ENCODE measurements at regions of chr9 and their contacts with region 1.

Region 1: GRCh38 chr9:35553670-35554543 is 51.2 kb upstream of the TESK1 start:
- DNase-seq: peak; percentile 58
- ATAC-seq: peak; percentile 68
- H3K4me3 Mint-ChIP-seq: no peak overlapping the region
- H3K27ac Mint-ChIP-seq: no peak overlapping the region
- H3K4me1 Mint-ChIP-seq: no peaks in the 10 kb centered on the region
- H3K27me3 Mint-ChIP-seq: peaks cover 2% of the 10 kb centered on the region

Region 2: GRCh38 chr9:35258676-35259474 is 295.0 kb before region 1 on chr9:
- CTCF ChIA-PET with region 1: interaction called, 13 read pairs
- POLR2A ChIA-PET with region 1: no interaction called
- DNase-seq: peak; percentile 62
- ATAC-seq: no peak
- H3K4me3 Mint-ChIP-seq: no peak overlapping the region
- H3K27ac Mint-ChIP-seq: no peak overlapping the region
- H3K4me1 Mint-ChIP-seq: peaks cover 4% of the 10 kb centered on the region
- H3K27me3 Mint-ChIP-seq: peaks cover 6% of the 10 kb centered on the region

Region 3: DNA sequence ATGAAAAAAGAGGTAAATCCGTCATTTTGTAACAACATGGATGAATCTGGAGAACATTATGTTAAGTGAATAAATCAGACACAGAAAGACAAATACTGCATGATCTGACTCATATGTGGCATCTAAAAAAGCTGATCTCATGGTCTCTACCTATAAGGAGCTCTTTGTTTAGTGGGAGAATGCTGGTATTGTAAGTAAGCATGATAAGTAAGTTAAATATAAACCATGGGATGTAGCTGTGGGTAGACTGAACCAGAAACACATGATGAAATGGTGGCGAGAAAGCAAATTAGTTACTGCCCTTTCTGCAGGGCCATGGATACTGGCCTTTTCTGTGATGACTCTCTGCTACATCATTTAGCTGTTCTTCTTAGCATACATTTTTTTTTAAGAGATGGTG is 130.4 kb before region 1 on chr9:
- CTCF ChIA-PET with region 1: no interaction called
- POLR2A ChIA-PET with region 1: no interaction called
- DNase-seq: no peak
- ATAC-seq: no peak
- H3K4me3 Mint-ChIP-seq: no peak overlapping the region
- H3K27ac Mint-ChIP-seq: no peak overlapping the region
- H3K4me1 Mint-ChIP-seq: no peaks in the 10 kb centered on the region
- H3K27me3 Mint-ChIP-seq: peaks cover 40% of the 10 kb centered on the region

Region 4: GRCh38 chr9:35452481-35452880 is 101.4 kb before region 1 on chr9:
- CTCF ChIA-PET with region 1: no interaction called
- POLR2A ChIA-PET with region 1: no interaction called
- DNase-seq: no peak
- ATAC-seq: no peak
- H3K4me3 Mint-ChIP-seq: no peak overlapping the region
- H3K27ac Mint-ChIP-seq: no peak overlapping the region
- H3K4me1 Mint-ChIP-seq: no peaks in the 10 kb centered on the region
- H3K27me3 Mint-ChIP-seq: peaks cover 14% of the 10 kb centered on the region

Region 5: GRCh38 chr9:35495984-35496383 is 57.9 kb before region 1 on chr9:
- CTCF ChIA-PET with region 1: interaction called, 10 read pairs
- POLR2A ChIA-PET with region 1: no interaction called
- DNase-seq: peak; percentile 41
- ATAC-seq: peak; percentile 82
- H3K4me3 Mint-ChIP-seq: no peak overlapping the region
- H3K27ac Mint-ChIP-seq: no peak overlapping the region
- H3K4me1 Mint-ChIP-seq: peaks cover 27% of the 10 kb centered on the region
- H3K27me3 Mint-ChIP-seq: no peaks in the 10 kb centered on the region

Region 6: DNA sequence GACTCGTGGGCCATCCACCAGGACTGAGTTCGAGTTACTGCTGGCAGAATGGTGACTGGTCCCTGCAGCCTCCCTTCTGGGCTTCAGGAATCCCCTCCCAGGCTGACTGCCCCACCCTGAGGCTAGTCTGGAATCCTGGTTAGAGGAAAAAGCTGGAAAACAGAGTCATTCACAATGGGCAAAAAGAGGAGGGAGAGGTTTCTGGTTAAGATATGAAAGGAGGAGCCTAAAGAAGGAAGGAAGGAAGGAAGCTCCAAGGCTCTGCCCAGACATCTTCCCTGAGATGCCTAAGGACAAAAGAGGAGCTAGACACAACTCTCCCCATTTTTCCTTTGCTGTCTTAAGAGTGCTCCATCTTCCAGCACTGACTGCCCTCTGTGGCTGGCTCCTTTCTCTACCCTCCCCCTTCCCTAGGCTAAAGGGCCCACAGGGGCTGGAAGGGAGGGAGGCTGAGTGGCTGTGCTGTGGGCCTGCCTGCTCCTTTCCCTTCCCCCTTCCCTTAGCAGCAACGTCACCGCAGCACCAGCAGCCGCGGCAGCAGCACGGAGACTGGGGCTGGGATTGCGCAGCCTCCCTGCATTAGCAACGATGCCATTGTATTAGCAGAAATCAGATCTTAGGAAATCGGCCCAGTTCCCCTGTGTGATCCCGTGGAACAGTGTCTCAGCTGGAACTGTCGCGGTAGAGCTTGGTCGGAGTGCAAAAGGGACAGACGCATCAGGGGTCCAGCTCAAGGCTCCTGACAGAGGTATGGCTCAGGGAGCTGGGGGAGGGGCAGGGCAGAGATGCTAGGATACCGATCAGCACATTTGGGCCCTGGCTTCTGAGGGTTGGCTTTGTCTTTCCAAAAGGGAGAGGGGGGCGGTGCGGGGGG is 15.3 kb before region 1 on chr9:
- CTCF ChIA-PET with region 1: interaction called, 17 read pairs
- POLR2A ChIA-PET with region 1: no interaction called
- DNase-seq: no peak
- ATAC-seq: no peak
- H3K4me3 Mint-ChIP-seq: no peak overlapping the region
- H3K27ac Mint-ChIP-seq: no peak overlapping the region
- H3K4me1 Mint-ChIP-seq: no peaks in the 10 kb centered on the region
- H3K27me3 Mint-ChIP-seq: peaks cover 12% of the 10 kb centered on the region

Region 7: DNA sequence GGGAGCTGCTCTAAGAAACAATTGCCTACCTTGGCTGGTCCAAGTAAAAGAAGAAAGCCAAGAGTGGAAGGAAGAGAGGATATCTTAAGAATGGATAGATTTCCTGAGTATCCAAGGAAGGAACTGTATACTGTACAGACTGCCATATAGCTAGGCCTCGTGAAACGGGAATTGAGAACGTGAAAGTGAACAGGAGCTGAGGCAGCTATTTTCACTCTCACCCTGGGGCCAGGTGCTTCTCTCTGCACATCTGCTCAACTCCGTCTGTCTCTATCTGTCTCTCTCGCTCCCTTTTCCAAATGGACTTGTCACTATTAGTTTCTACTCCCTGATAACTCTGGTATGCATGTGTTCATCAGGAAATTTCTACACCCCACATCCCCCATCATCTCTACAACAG is 15.3 kb after region 1 on chr9:
- CTCF ChIA-PET with region 1: interaction called, 12 read pairs
- POLR2A ChIA-PET with region 1: interaction called, 3 read pairs
- DNase-seq: no peak
- ATAC-seq: no peak
- H3K4me3 Mint-ChIP-seq: no peak overlapping the region
- H3K27ac Mint-ChIP-seq: peak overlapping the region; percentile 41
- H3K4me1 Mint-ChIP-seq: peaks cover 40% of the 10 kb centered on the region
- H3K27me3 Mint-ChIP-seq: no peaks in the 10 kb centered on the region

Measured in activated CD8-positive, alpha-beta T cell treated with anti-CD3 and anti-CD28 coated beads, Interleukin-2, amount 10 ng/mL, durations not matched to agents 7 days and 5 days (primary cell).